Naive thymus-derived CD8-positive, alpha-beta T cell (primary cell): ENCODE measurements at regions of chr11 and their contacts with region 1.

Region 1: GRCh38 chr11:66371627-66372415 is at the start of gene SLC29A2:
- DNase-seq: peak; percentile 65 to 89 (median 82)
- ATAC-seq: peak; percentile 80 to 83
- H3K4me3 Mint-ChIP-seq: peak within 1 kb of the TSS; percentile 77 to 95 (median 91)
- H3K27ac Mint-ChIP-seq: peak within 1 kb of the TSS; percentile 80 to 98 (median 94)
- H3K4me1 Mint-ChIP-seq: peaks cover 6 to 17% (median 12%) of the 10 kb centered on the region in 4 donors
- H3K27me3 Mint-ChIP-seq: no peaks in the 10 kb centered on the region
- polyA plus RNA-seq, gene SLC29A2: 1.4 to 3.9 (median 2.3) TPM

Region 2: DNA sequence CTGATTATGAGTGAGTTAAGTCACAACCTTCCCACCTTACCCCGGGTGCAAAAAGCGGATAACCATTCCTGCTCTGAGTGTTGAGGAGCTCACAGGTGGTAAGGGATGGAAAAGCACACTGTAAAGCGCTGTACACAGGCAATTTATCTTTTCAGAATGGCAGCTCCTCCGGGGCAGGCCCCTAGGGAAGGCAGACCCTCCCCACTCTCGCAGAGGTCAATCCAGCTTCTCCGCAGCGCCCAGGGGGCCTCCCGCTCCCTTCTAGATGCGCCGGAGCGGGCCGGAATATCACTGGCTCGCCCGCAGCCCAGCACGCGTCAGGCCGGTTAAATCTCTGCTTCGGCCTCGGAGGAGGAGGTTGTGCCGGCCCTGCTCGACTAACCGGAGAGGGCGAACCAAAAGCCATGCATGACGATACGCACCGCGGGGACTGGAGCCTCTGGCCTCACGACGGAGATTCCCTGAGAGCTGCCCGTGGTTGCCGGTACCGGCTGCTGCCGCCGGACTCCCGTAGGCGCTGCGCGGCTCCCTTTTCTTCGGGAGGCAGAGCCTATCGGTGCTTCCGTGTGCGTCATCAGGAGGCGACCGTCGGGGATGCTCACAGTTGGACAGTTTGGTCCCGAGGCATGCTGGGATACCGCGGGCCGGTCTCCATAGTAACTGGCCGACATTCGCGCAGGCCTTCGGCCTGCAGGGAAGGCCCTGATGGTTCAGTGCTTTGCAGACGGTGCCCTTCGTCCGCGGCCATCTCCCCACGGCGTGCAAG is 27.1 kb before region 1 on chr11 and contains the start of gene BRMS1:
- POLR2A ChIA-PET with region 1: interaction called, 11 read pairs
- DNase-seq: peak; percentile 87 to 99 (median 94)
- ATAC-seq: peak; percentile 73 to 79
- H3K4me3 Mint-ChIP-seq: peak within 1 kb of the TSS; percentile 93 to 97 (median 95)
- H3K27ac Mint-ChIP-seq: peak within 1 kb of the TSS; percentile 88 to 99 (median 98)
- H3K4me1 Mint-ChIP-seq: peaks cover 29 to 60% (median 53%) of the 10 kb centered on the region in 4 donors
- H3K27me3 Mint-ChIP-seq: peaks cover 0 to 4% (median 0%) of the 10 kb centered on the region in 5 donors
- polyA plus RNA-seq, gene BRMS1: 61.7 to 65.8 (median 63.6) TPM

Region 3: DNA sequence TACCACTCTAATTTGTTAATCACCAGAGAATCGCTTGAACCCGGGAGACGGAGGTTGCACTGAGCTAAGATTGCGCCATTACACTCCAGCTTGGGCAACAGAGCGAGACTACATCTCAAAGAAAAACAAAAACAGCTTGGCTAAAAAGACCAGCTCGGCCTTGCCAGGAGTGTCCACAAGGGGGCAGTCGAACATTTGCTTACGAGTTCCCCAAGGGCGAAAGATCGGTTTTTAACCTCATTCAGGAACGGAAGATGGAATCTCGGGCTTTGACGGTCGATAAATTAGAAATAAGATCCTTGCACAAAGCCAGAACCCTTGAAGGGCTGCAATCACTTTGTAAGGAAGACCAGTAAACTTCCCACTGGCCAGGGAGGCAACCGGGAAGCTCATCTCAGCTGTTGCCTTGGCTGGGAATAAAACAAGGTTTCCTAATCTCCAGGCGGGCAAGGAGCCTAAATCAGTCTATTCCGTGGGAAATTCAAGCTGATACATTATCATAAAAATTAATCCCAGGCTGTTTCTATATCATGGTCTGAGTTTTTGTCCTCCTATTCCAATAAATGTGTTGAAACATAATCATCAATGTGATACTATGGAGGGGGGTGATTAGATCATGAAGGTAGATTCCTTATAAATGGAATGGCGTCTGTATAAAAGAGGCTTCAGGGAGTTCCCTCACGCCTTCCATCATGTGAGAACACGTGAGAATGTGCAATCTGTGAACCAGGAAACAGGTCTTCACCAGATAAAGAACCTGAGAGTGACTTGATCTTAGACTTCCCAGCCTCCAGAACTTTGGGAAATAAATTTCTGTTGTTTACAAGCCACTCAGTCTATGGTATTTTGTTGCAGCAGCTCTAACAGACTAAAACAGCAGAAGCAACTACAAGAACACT is 14.6 kb after region 1 on chr11:
- POLR2A ChIA-PET with region 1: interaction called, 14 read pairs
- DNase-seq: peak; percentile 63 to 90 (median 78)
- ATAC-seq: peak; percentile 78 to 86
- H3K4me3 Mint-ChIP-seq: peak overlapping the region in 8 of 10 donors; percentile 7 to 71 (median 42)
- H3K27ac Mint-ChIP-seq: peak overlapping the region in 4 of 10 donors; percentile 0 to 17 (median 8)
- H3K4me1 Mint-ChIP-seq: peaks cover 5 to 8% (median 7%) of the 10 kb centered on the region in 4 donors
- H3K27me3 Mint-ChIP-seq: peaks cover 0 to 1% (median 0%) of the 10 kb centered on the region in 5 donors